Motor neuron (in vitro differentiated cells): ENCODE measurements at regions of chr15 and their contacts with region 1.

Region 1: DNA sequence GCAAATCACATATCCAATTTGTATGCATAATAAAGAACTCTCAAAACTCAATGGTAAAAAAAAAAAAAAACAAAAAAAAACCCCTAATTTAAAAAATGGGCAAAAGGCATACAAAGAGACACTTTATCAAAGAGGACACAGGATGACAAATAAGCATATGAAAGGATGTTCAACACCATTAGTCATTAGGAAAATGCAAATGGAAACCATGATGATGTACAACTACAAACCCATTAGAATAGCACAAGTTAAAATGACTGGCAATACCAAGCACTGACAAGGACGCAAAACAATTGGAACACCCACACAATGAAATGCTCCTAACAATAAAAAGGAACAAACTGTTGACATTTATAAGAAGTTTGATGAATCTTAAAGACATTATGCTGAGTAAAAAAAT is 63.4 kb upstream of the ADAMTS17 start:
- ATAC-seq: peak in 3 of 8 experiments; percentile 42 to 57 (median 56)
- H3K4me3 ChIP-seq: no peak overlapping the region
- H3K27ac ChIP-seq: no peak overlapping the region
- H3K4me1 ChIP-seq: no peaks in the 10 kb centered on the region

Region 2: DNA sequence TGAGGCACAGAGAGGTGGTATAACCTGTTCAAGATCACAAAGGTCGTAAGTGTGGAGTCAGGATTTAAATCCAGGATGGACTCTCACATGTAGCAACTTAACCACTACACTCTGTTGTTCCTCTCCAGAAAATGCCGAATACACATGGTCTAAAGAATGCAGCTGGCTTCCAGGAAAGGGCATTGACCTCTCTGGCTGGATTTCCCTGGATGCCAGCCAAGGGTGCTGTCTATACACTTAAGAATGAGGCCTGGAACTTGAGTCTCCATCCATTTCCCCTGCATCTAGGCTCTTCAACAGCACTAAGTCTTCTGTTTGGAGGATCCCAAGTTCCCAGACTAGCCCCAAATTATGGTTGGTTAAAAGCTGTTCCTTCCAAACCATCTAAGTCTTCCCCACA is 63.1 kb after region 1 on chr15:
- in situ Hi-C with region 1: loop called in 1 of 9 experiments (anchors 10 kb)
- ATAC-seq: peak in 2 of 8 experiments; percentile 49 to 53
- H3K4me3 ChIP-seq: no peak overlapping the region
- H3K27ac ChIP-seq: no peak overlapping the region
- H3K4me1 ChIP-seq: peaks cover 6 to 7% of the 10 kb centered on the region in 2 donors

Region 3: GRCh38 chr15:100612539-100612938 is 207.4 kb after region 1 on chr15:
- in situ Hi-C with region 1: no loop called
- ATAC-seq: no peak
- H3K4me3 ChIP-seq: no peak overlapping the region
- H3K27ac ChIP-seq: no peak overlapping the region
- H3K4me1 ChIP-seq: no peaks in the 10 kb centered on the region

Region 4: DNA sequence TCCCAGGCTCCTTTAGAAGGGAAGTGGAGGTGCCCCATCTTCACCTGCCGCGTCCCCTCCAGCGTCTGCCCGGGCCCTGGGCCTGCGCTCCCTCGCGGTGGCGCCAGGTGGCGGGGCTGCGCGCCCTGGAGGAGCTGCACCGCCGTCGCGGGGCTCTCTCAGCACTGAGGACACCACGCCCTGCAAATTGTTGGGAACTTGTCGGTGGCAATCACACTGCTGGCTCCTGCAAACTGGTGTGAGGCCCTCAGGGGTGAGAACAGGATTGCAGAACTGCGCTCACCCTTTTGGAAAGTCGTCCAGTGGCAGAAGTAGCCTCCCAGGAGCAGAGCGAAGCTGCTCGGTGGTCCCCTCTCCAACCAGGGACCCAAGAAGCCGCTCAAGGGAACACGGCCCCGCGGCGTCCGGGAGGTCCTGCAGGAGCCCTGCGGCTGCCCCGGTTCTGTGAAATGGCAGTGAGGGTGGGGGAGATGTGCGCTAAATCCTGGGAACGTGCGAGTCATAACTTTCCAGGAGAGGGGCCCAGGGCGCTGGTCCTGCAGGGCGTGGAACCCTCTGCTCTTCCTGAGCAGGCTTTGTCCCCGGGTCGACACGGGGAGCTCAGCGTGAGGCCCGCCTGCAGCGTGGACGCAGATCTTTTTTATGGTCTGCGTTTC is 513.0 kb after region 1 on chr15:
- in situ Hi-C with region 1: no loop called
- ATAC-seq: peak; percentile 59 to 89 (median 83)
- H3K4me3 ChIP-seq: peak overlapping the region in 4 of 5 donors; percentile 33 to 40 (median 36)
- H3K27ac ChIP-seq: no peak overlapping the region
- H3K4me1 ChIP-seq: peaks cover 0 to 5% of the 10 kb centered on the region in 2 donors